RWPE1 (cell line): ENCODE measurements at regions of chr16 and their contacts with region 1.

Region 1: GRCh38 chr16:74843719-74844433 is 69.3 kb upstream of the FA2H start:
- DNase-seq: peak; percentile 30
- H3K27ac ChIP-seq: no peak overlapping the region
- CTCF ChIP-seq: no peak

Region 2: GRCh38 chr16:73558219-73558618 is 1285.7 kb before region 1 on chr16:
- CTCF ChIA-PET with region 1: no interaction called
- POLR2A ChIA-PET with region 1: interaction called, 12 read pairs
- DNase-seq: no peak
- H3K27ac ChIP-seq: no peak overlapping the region
- CTCF ChIP-seq: no peak